Activated CD4-positive, alpha-beta memory T cell treated with anti-CD3 and anti-CD28 coated beads for 36 hours (primary cell): ENCODE measurements at regions of chr1 and their contacts with region 1.

Region 1: GRCh38 chr1:169711469-169712281 is at the start of gene SELL:
- DNase-seq: peak; percentile 85
- H3K4me3 Mint-ChIP-seq: peak within 1 kb of the TSS; percentile 71
- H3K27ac Mint-ChIP-seq: peak within 1 kb of the TSS; percentile 81
- H3K4me1 Mint-ChIP-seq: peaks cover 21% of the 10 kb centered on the region
- H3K27me3 Mint-ChIP-seq: peaks cover 2% of the 10 kb centered on the region
- total RNA-seq, gene SELL: 103 to 110 TPM

Region 2: DNA sequence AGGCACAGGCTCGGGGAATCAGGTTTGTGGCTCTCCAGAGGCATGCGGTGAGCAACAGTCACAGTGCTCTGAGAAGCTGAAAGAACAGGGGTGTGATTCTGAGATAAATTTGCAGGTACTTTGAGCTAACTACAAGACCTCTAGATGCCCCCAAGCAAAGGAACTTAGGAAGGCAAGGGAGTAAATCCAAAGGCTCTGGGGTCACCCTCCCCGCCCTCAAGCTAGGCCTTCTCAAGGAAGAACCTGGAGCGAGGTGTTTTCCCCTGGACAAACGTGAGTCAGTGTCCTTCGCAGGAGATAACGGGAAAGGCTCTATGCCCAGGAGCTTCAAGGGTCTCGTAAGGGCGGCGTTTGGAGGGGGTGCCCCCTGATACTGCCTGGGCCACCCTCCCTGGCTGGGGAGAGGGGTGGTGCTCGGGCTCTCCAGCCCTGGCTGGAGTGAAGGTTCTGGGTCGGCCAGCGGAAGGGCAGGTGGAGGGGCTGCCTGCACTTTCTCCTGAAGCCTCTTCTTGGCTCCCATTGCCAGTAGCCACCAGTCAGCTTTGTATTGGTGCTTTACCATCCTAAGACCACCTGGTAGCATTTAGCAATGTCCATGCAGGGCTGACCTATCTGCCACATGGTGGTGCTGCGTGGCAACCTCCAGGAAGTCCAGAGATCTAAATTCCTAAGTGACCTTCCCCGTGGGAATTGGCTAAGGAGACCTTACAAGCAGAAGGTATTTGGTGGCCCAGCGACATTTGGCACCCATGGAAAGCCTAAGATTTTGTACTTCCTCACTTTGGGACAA is 1618.9 kb before region 1 on chr1:
- CTCF ChIA-PET with region 1: no interaction called
- POLR2A ChIA-PET with region 1: no interaction called
- intact Hi-C with region 1: no loop called
- DNase-seq: no peak
- H3K4me3 Mint-ChIP-seq: no peak overlapping the region
- H3K27ac Mint-ChIP-seq: no peak overlapping the region
- H3K4me1 Mint-ChIP-seq: no peaks in the 10 kb centered on the region
- H3K27me3 Mint-ChIP-seq: no peaks in the 10 kb centered on the region

Region 3: GRCh38 chr1:169546087-169546995 is 165.3 kb before region 1 on chr1:
- CTCF ChIA-PET with region 1: interaction called, 18 read pairs
- POLR2A ChIA-PET with region 1: no interaction called
- intact Hi-C with region 1: loop called (anchors 1 kb)
- DNase-seq: peak; percentile 49
- H3K4me3 Mint-ChIP-seq: no peak overlapping the region
- H3K27ac Mint-ChIP-seq: no peak overlapping the region
- H3K4me1 Mint-ChIP-seq: no peaks in the 10 kb centered on the region
- H3K27me3 Mint-ChIP-seq: no peaks in the 10 kb centered on the region

Region 4: DNA sequence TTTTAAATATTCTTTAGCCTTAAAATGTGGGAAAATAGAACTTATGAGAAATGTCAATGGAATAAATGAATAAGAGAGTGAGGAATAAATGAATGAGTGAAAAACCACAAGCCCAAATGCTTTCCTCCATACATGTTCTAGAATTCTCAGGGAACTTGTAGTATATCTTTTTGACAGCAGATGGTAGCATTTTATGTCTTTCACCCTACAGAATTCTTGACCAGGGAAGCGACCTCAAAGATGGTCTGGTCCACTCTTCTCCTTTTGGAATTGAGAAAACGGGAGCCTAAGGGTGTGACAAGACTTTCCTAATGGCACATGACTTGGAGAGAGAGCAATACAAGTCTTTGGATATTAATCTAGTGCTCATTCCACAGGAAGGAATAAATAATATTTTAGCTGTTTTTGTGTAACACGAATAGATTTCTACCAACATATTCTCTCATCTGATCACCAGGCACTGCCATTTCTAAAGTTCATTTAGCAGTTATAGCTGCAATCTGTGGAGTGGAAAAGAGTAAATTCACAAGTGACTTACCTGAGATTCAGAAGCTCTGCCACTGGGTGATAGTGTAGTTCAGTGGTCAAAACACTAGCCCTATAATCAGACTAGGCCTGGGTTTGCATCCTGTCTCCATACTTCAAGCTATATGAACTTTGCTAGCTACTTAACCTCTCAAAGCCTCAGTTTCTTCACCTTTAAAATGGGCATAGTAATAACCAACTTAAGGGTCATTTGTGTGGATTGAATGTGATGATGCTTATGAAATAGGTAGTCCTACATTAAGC is 110.4 kb before region 1 on chr1:
- CTCF ChIA-PET with region 1: interaction called, 208 read pairs
- POLR2A ChIA-PET with region 1: interaction called, 8 read pairs
- intact Hi-C with region 1: loop called (anchors 1 kb)
- DNase-seq: no peak
- H3K4me3 Mint-ChIP-seq: peak overlapping the region; percentile 7
- H3K27ac Mint-ChIP-seq: peak overlapping the region; percentile 48
- H3K4me1 Mint-ChIP-seq: peaks cover 51% of the 10 kb centered on the region
- H3K27me3 Mint-ChIP-seq: no peaks in the 10 kb centered on the region

Region 5: DNA sequence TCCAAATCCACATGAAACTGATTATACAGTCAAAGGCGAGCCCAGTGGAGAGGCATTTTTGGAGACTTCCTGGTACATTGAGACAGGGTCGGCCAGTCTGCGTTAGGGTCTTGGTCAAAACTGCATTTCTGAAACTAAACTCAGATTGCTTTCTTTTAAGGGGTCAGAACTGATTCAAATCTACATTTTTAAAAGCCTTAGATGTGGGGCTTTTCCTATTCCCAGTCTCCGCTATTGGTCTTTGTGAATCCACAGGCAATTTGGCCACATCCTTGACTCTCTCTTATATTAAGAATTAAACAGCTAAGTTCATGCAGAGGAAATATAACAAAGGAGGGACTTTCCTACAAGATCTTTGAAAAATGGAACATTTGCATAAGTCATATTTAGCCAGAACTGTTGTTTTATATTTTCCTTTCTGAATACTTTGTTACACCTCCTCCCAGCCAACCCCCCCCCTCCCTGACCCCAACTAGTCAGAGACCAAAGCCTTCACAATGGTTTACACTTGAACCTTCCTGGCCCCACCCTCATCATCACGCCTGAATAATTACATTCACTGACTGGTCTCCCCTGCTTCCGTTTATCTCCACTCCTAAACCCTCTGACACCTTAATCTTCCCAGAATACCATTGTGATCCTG is 31.2 kb before region 1 on chr1:
- CTCF ChIA-PET with region 1: interaction called, 11 read pairs
- POLR2A ChIA-PET with region 1: interaction called, 5 read pairs
- intact Hi-C with region 1: loop called (anchors 1 kb)
- DNase-seq: peak; percentile 80
- H3K4me3 Mint-ChIP-seq: peak overlapping the region; percentile 46
- H3K27ac Mint-ChIP-seq: peak overlapping the region; percentile 90
- H3K4me1 Mint-ChIP-seq: peaks cover 62% of the 10 kb centered on the region
- H3K27me3 Mint-ChIP-seq: no peaks in the 10 kb centered on the region

Region 6: GRCh38 chr1:169753552-169753951 is 41.9 kb after region 1 on chr1:
- CTCF ChIA-PET with region 1: no interaction called
- POLR2A ChIA-PET with region 1: no interaction called
- intact Hi-C with region 1: no loop called
- DNase-seq: no peak
- H3K4me3 Mint-ChIP-seq: no peak overlapping the region
- H3K27ac Mint-ChIP-seq: no peak overlapping the region
- H3K4me1 Mint-ChIP-seq: peaks cover 3% of the 10 kb centered on the region
- H3K27me3 Mint-ChIP-seq: peaks cover 5% of the 10 kb centered on the region

Region 7: GRCh38 chr1:169794530-169795416 is 83.1 kb after region 1 on chr1 and contains the start of gene METTL18:
- CTCF ChIA-PET with region 1: interaction called, 14 read pairs
- POLR2A ChIA-PET with region 1: interaction called, 3 read pairs
- intact Hi-C with region 1: no loop called
- DNase-seq: peak; percentile 96
- H3K4me3 Mint-ChIP-seq: peak within 1 kb of the TSS; percentile 100
- H3K27ac Mint-ChIP-seq: peak within 1 kb of the TSS; percentile 99
- H3K4me1 Mint-ChIP-seq: peaks cover 44% of the 10 kb centered on the region
- H3K27me3 Mint-ChIP-seq: no peaks in the 10 kb centered on the region
- total RNA-seq, gene METTL18: 10.8 to 10.9 TPM

Region 8: GRCh38 chr1:169933984-169934725 is 222.5 kb after region 1 on chr1:
- CTCF ChIA-PET with region 1: no interaction called
- POLR2A ChIA-PET with region 1: no interaction called
- intact Hi-C with region 1: no loop called
- DNase-seq: no peak
- H3K4me3 Mint-ChIP-seq: no peak overlapping the region
- H3K27ac Mint-ChIP-seq: no peak overlapping the region
- H3K4me1 Mint-ChIP-seq: no peaks in the 10 kb centered on the region
- H3K27me3 Mint-ChIP-seq: no peaks in the 10 kb centered on the region